ENCODE measurements at regions of chr10 and their contacts with region 1.

Region 1: DNA sequence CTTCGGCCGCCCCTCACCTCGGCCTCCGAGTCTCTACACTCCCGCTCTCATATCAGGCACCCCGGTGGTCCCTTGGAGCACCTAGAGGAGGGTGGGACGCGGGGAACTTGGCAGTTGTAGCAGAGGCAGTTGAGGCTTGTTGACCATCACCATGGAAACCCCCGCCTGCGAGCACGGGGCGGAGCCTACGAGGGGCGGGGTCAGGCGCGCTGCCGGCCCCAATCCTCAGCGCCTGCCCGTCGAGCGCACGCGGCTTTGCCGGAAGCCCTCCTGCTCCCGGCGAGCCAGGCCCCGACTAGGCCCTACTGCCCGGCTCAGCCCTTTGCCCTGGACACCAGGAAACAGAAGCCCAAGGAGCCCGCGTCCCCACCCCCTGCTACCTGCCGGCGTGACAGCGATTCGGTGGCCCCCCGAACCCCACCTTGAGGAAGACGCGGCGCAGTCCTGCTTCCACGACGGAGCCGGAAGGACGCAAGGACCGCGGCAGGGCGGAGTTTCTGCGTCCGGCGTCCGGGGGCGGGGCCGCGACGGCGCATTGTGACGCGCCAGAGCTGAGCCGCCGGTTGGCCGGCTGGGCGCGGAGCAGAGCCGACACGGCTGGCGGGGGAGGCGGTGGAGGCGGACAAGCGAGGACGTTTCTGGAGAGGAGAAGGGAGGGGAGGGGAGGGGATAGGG is at the start of gene HNRNPF:
- DNase-seq: peak; percentile 94
- H3K4me3 ChIP-seq: peak within 1 kb of the TSS; percentile 67 to 86
- H3K27ac ChIP-seq: peak within 1 kb of the TSS; percentile 92 to 97
- H3K4me1 ChIP-seq: peaks cover 11 to 12% of the 10 kb centered on the region in 2 experiments; a peak in 2 of 4 replicates
- H3K27me3 ChIP-seq: no peaks in the 10 kb centered on the region
- CTCF ChIP-seq: no peak
- EP300 ChIP-seq: no peak; a peak in 1 of 4 replicates
- RAD21 ChIP-seq: no peak
- polyA plus RNA-seq, gene HNRNPF: 195 and 217 TPM in 2 replicates

Region 2: DNA sequence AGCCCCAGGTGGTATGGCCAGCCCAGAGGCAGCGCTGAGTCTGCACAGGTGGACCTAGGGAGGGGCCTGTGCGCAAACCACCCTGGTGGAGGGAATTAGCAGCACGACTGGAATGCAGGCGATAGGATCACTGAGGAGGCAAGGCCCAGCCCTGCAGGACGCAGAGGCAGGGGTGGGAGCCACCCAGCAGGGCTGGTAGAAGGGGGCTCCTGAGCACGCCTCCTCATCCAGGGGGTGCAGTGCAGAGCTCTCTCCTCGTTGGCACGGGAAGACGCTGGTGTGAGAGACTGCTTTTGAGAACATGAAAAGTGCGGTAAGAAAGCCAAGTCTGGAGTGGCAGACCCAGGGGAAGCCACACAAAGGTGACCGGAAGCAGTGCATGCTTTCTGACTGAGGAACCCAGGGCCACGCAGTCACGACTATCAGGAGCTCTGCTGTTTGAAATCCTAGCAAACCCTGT is 31.4 kb before region 1 on chr10:
- CTCF ChIA-PET with region 1: no interaction called
- POLR2A ChIA-PET with region 1: no interaction called
- DNase-seq: peak; percentile 15
- H3K4me3 ChIP-seq: no peak overlapping the region
- H3K27ac ChIP-seq: no peak overlapping the region
- H3K4me1 ChIP-seq: no peaks in the 10 kb centered on the region
- H3K27me3 ChIP-seq: no peaks in the 10 kb centered on the region
- CTCF ChIP-seq: no peak; the same call in 1 of the 2 replicates
- EP300 ChIP-seq: no peak
- RAD21 ChIP-seq: no peak

Region 3: GRCh38 chr10:43396928-43397624 is 11.8 kb before region 1 on chr10:
- CTCF ChIA-PET with region 1: interaction called, 4 read pairs
- POLR2A ChIA-PET with region 1: interaction called, 11 read pairs
- DNase-seq: peak; percentile 92
- H3K4me3 ChIP-seq: peak overlapping the region; percentile 61 to 63
- H3K27ac ChIP-seq: peak overlapping the region; percentile 76 to 92
- H3K4me1 ChIP-seq: peaks cover 20 to 46% of the 10 kb centered on the region in 2 experiments
- H3K27me3 ChIP-seq: no peaks in the 10 kb centered on the region
- CTCF ChIP-seq: no peak
- EP300 ChIP-seq: no peak; a peak in 1 of 4 replicates
- RAD21 ChIP-seq: no peak

Region 4: GRCh38 chr10:43420369-43421200 is 11.7 kb after region 1 on chr10:
- CTCF ChIA-PET with region 1: interaction called, 6 read pairs
- POLR2A ChIA-PET with region 1: interaction called, 12 read pairs
- DNase-seq: peak; percentile 87
- H3K4me3 ChIP-seq: peak overlapping the region; percentile 34 to 61
- H3K27ac ChIP-seq: peak overlapping the region; percentile 19 to 83
- H3K4me1 ChIP-seq: peaks cover 5% of the 10 kb centered on the region in 2 experiments; a peak in 2 of 4 replicates
- H3K27me3 ChIP-seq: no peaks in the 10 kb centered on the region
- CTCF ChIP-seq: peak; percentile 45
- EP300 ChIP-seq: no peak
- RAD21 ChIP-seq: no peak

Measured in SK-N-SH (cell line).